ENCODE measurements at regions of chr5 and their contacts with region 1.

Region 1: DNA sequence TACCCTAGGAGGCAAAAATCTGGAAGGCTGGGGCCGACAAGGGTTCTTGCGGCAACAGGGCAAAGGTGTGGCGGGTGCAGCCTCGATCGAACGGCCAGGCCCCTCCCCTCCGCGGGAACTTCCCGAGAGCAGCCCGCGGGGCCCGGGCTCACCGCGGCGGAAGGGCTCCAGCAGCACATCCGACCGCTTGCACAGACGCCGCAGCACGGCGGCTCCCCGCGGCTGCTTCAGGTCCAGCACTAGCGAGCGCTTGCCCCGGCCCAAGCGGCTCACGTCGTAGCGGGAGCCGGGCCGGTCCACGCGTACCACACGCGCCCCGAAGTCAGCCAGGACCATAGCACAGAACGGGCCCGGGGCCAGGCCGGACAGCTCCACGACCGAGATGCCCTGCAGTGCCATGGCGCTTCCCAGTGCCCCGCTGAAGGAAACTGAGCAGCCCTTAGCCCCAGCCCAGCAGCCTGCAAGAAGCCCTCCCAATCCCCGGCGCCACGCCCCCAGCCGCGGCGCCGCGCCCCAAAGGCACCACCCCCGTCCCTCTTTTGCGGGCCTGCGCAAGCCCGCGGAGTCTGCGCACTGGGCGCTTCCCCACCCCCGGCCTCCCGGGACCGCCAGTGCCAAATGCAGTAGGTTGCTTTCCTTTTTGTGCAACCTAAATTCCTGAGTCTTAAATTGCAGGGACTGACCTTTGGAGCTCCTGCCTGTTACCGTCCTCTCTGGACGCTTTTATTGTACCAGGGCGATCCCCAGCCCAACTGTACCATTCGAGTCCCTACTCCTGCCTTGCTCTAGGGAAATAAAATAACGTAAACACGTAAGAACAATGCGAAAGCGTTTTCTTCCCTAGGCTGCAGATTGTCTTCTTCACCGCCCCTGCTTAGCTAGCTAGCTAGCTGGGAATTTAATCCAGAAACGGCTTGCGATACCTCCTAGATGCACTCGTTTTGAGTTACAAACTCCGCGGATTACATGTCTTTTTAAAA is at the start of gene AMACR:
- DNase-seq: peak; percentile 86
- H3K4me3 Mint-ChIP-seq: peak within 1 kb of the TSS; percentile 79
- H3K27ac Mint-ChIP-seq: peak within 1 kb of the TSS; percentile 89
- H3K4me1 Mint-ChIP-seq: peaks cover 36% of the 10 kb centered on the region
- H3K27me3 Mint-ChIP-seq: peaks cover 2% of the 10 kb centered on the region
- total RNA-seq, gene AMACR: 7.5 to 7.8 TPM

Region 2: DNA sequence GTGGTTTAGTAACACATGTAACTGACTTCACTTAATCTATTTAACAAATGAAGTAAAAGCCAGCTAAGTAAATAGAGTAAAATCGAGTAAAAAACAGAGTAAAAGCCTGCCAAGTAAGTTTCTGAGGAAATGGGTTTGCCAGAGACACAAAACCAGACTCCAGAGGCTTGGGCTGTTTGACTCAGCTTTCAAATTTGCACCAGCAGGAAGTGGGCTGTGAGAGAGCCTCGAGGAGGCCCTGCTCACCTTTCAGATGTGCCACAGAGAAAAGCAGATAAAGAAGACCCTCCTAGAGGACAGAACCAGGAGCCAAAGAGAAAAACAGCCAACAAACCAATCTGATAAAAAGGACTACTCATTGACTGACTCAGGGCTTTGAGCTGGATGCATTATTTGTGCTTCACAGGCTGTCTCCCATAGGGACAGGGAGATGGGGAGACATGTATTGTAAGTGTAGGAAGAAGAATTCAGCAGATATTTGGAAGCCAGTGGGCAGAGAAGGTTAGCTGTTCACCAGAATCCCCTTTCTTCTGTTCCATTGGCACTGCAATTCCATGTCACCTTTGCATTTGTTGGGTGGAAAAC is 14.3 kb after region 1 on chr5:
- CTCF ChIA-PET with region 1: no interaction called
- POLR2A ChIA-PET with region 1: interaction called, 24 read pairs
- DNase-seq: peak; percentile 64
- H3K4me3 Mint-ChIP-seq: peak overlapping the region; percentile 2
- H3K27ac Mint-ChIP-seq: peak overlapping the region; percentile 80
- H3K4me1 Mint-ChIP-seq: peaks cover 33% of the 10 kb centered on the region
- H3K27me3 Mint-ChIP-seq: no peaks in the 10 kb centered on the region

Measured in activated CD4-positive, alpha-beta memory T cell treated with anti-CD3 and anti-CD28 coated beads, Interleukin-2, amount 10 ng/mL, durations not matched to agents 7 days and 5 days (primary cell).